Activated CD8-positive, alpha-beta T cell treated with anti-CD3 and anti-CD28 coated beads, Interleukin-2, amount 10 ng/mL, durations not matched to agents 7 days and 5 days (primary cell): ENCODE measurements at regions of chr5 and their contacts with region 1.

Region 1: GRCh38 chr5:91419571-91420537 is 36.7 kb upstream of the ARRDC3 start:
- DNase-seq: peak; percentile 82
- ATAC-seq: no peak
- H3K4me3 Mint-ChIP-seq: no peak overlapping the region
- H3K27ac Mint-ChIP-seq: no peak overlapping the region
- H3K4me1 Mint-ChIP-seq: peaks cover 3% of the 10 kb centered on the region
- H3K27me3 Mint-ChIP-seq: peaks cover 2% of the 10 kb centered on the region

Region 2: GRCh38 chr5:90932052-90932699 is 487.7 kb before region 1 on chr5:
- CTCF ChIA-PET with region 1: interaction called, 33 read pairs
- POLR2A ChIA-PET with region 1: no interaction called
- DNase-seq: peak; percentile 56
- ATAC-seq: no peak
- H3K4me3 Mint-ChIP-seq: no peak overlapping the region
- H3K27ac Mint-ChIP-seq: no peak overlapping the region
- H3K4me1 Mint-ChIP-seq: peaks cover 5% of the 10 kb centered on the region
- H3K27me3 Mint-ChIP-seq: peaks cover 4% of the 10 kb centered on the region

Region 3: DNA sequence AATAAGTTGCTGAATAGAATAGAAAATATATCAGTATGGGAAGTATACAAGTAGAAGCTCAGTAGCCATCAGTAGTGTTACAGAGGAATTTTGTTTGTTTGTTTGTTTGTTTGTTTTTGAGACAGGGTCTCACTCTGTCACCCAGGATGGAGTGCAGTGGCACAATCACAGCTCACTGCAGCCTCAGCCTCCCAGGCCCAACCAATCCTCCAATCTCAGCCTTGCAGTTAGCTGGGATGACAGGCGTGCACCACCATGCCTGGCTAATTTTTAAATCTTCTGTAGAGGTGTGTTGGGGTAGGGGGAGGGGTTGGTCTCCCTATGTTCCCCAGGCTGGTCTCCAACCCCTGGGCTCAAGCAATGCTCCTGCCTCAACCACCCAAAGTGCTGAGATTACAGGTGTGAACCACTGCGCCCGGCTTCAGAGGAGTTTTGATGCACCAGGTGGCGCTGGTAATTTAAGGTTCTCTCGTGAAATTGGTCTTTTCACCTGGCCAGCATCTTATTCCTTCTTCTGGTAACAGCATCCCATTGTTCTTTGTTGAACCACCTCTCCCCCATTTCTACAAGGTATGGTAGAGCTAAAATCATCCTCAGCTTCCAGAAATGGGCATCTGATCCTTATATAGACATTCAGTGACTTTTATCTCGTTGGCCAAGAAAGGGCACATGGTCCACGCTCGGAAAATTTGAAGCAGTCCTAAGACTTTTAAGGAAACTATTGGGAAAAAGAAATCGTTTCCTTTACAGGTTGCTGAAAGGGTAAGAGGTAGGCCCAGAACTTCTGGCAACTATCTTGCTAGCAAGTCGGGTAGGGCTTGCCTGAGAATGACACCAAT is 193.8 kb before region 1 on chr5:
- CTCF ChIA-PET with region 1: interaction called, 10 read pairs
- POLR2A ChIA-PET with region 1: no interaction called
- DNase-seq: peak; percentile 71
- ATAC-seq: peak; percentile 71
- H3K4me3 Mint-ChIP-seq: no peak overlapping the region
- H3K27ac Mint-ChIP-seq: no peak overlapping the region
- H3K4me1 Mint-ChIP-seq: no peaks in the 10 kb centered on the region
- H3K27me3 Mint-ChIP-seq: peaks cover 4% of the 10 kb centered on the region

Region 4: GRCh38 chr5:91408710-91409109 is 11.1 kb before region 1 on chr5:
- CTCF ChIA-PET with region 1: interaction called, 36 read pairs
- POLR2A ChIA-PET with region 1: no interaction called
- DNase-seq: no peak
- ATAC-seq: no peak
- H3K4me3 Mint-ChIP-seq: no peak overlapping the region
- H3K27ac Mint-ChIP-seq: no peak overlapping the region
- H3K4me1 Mint-ChIP-seq: no peaks in the 10 kb centered on the region
- H3K27me3 Mint-ChIP-seq: no peaks in the 10 kb centered on the region